HEK293 (cell line): ENCODE measurements at regions of chr22 and their contacts with region 1.

Region 1: GRCh38 chr22:19275919-19276600 is 15.5 kb downstream of the CLTCL1 start:
- H3K4me3 ChIP-seq: no peak overlapping the region
- H3K27ac ChIP-seq: no peak overlapping the region
- H3K4me1 ChIP-seq: 0 out of 2 replicates have a peak, but pooled peaks cover 6% of the 10 kb centered on the region
- CTCF ChIP-seq: no peak

Region 2: GRCh38 chr22:19228179-19228578 is 47.9 kb before region 1 on chr22:
- CTCF ChIA-PET with region 1: no interaction called
- POLR2A ChIA-PET with region 1: no interaction called
- H3K4me3 ChIP-seq: no peak overlapping the region
- H3K27ac ChIP-seq: no peak overlapping the region
- H3K4me1 ChIP-seq: peaks cover 6% of the 10 kb centered on the region; the same call in 1 of the 2 replicates
- CTCF ChIP-seq: no peak

Region 3: GRCh38 chr22:19260804-19261203 is 15.3 kb before region 1 on chr22:
- CTCF ChIA-PET with region 1: interaction called, 10 read pairs
- POLR2A ChIA-PET with region 1: no interaction called
- H3K4me3 ChIP-seq: no peak overlapping the region
- H3K27ac ChIP-seq: no peak overlapping the region
- H3K4me1 ChIP-seq: no peaks in the 10 kb centered on the region
- CTCF ChIP-seq: no peak